ENCODE measurements at regions of chr17 and their contacts with region 1.

Region 1: DNA sequence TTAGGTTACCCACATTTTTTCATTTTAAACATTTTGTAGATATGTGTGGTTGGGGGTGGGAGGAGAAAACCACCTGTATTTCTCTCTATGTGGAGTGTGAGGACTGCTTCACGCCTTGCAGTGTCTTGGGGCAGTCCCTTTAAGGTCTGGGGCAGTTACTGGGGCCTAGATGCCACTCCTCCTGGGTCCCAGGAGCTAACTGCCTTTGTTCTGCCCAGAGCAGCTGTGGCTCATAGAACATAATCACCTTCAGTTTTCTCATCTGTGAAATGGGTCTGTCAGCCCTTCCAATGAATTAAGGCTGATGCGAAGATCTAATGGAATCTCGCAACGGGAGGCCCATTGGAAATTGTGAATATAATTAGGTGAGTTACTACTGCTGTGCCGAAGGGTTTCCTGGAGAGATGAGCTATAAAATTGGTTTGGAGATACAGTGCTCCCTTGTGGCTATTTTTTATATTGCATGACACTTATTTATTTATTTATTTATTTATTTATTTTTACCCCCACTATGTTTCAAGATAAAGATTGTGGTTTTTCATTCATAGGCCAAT is 22.9 kb downstream of the DHRS7C start:
- DNase-seq: no peak

Region 2: GRCh38 chr17:9575381-9576101 is 192.9 kb before region 1 on chr17 and contains the start of gene STX8:
- intact Hi-C with region 1: loop called (anchors 10 kb)
- DNase-seq: peak; percentile 95
- total RNA-seq, gene STX8: 53.0 TPM

Region 3: GRCh38 chr17:9612006-9612405 is 156.5 kb before region 1 on chr17:
- intact Hi-C with region 1: no loop called
- DNase-seq: no peak

Region 4: GRCh38 chr17:9729034-9729650 is 39.3 kb before region 1 on chr17:
- intact Hi-C with region 1: loop called (anchors 2 kb)
- DNase-seq: no peak